IMR-90 (cell line): ENCODE measurements at regions of chr14 and their contacts with region 1.

Region 1: DNA sequence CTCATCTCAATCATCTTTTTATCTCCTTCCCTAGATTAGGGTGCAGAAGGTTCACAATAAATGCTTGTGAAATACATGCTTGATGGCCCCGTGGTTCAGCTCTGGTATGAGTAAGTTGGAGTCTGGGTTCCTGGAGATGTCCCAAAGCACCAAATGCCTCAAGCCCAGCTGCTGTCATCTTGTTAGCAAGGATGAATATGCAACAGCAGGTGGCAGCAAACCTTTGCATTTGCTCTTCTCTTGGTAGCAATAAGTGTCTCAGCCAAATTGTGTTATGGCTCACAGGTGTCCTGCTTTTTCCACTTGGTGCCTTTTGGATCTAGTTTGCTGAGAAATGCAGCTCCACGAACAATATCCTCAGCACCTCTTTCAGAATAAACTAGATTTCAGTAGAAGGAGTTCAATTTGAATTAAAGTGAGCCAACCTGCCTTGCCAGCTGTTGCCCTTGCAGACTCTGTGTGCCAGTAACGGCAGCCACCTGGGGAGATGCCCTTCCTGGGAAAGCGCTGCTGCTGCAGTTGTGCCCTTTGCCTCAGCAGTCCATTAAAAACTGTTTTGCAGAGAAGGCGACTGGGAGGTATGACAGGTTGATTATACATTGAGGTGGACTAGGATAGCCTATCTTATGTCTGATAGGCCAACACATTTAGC is 417.3 kb downstream of the SNAPC1 start:
- DNase-seq: peak; percentile 91
- ATAC-seq: peak; percentile 85
- H3K4me3 ChIP-seq: no peak overlapping the region
- H3K27ac ChIP-seq: no peak overlapping the region
- H3K4me1 ChIP-seq: no peaks in the 10 kb centered on the region
- H3K27me3 ChIP-seq: peaks cover 3% of the 10 kb centered on the region
- CTCF ChIP-seq: peak; percentile 86
- POLR2A ChIP-seq: peak; percentile 43; the same call in 1 of the 2 replicates
- RAD21 ChIP-seq: peak; percentile 97

Region 2: DNA sequence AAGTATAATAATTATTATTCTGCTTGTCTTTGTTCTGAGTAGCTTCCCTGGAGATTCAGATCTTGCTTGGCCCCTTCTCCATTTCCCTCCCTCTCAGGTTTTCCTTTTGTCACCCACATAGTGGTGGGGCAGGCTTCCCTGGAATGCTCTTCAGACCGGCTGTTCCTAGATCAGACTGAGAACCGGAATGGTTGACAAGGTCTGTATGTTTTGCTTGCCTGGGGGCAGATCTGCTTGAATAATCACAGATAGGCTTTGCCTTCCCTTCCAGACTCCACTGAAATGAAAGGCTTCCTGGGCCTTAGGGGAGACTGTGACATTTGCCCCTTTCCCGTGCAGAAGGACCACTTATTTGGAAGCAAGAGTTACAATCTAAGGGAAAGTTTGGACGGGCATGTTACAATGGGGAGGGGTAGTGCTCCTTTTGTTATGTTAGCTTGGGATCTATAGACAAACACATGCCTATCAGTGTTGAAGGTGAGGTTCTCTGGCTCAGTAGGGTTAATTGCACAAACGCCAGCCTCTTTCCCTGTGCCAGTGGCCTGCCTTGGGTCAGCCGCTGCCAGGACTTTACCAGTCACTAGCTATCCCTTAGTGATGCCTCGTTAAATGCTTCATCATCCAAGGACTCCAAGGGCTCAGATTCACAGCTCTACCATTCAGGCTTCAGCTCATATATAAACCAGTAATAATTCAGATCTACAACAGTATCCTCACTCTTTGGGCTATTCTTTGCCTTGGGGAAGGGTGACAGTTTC is 238.6 kb before region 1 on chr14:
- CTCF ChIA-PET with region 1: no interaction called
- POLR2A ChIA-PET with region 1: no interaction called
- dilution Hi-C with region 1: no loop called
- in situ Hi-C with region 1: no loop called
- intact Hi-C with region 1: no loop called
- DNase-seq: no peak
- ATAC-seq: no peak; the same call in 1 of the 2 replicates
- H3K4me3 ChIP-seq: no peak overlapping the region
- H3K27ac ChIP-seq: no peak overlapping the region
- H3K4me1 ChIP-seq: peaks cover 4% of the 10 kb centered on the region
- H3K27me3 ChIP-seq: no peaks in the 10 kb centered on the region
- CTCF ChIP-seq: no peak
- POLR2A ChIP-seq: no peak
- RAD21 ChIP-seq: no peak

Region 3: DNA sequence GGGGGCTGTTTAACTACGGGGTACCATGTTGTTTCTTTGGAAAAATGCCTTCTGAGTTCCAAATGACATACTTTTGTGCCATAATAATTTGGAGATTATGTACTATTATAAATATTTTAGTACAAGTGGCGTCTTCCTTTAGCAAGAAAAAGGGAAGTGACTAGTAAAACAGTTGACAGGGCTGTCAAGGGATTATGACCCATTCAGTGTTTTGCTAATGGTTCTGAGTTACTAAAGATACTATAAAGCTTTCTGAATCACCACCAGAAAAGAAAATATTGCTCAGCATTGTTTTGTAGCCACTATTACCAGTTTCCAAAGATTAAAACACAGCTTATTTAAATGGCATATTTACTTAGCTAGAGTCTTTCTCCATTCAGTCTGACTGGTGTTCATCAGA is 82.4 kb before region 1 on chr14:
- CTCF ChIA-PET with region 1: no interaction called
- POLR2A ChIA-PET with region 1: no interaction called
- dilution Hi-C with region 1: no loop called
- in situ Hi-C with region 1: no loop called
- intact Hi-C with region 1: no loop called
- DNase-seq: peak; percentile 3
- ATAC-seq: no peak; the same call in 1 of the 2 replicates
- H3K4me3 ChIP-seq: no peak overlapping the region
- H3K27ac ChIP-seq: no peak overlapping the region
- H3K4me1 ChIP-seq: no peaks in the 10 kb centered on the region
- H3K27me3 ChIP-seq: no peaks in the 10 kb centered on the region
- CTCF ChIP-seq: no peak
- POLR2A ChIP-seq: no peak
- RAD21 ChIP-seq: no peak

Region 4: DNA sequence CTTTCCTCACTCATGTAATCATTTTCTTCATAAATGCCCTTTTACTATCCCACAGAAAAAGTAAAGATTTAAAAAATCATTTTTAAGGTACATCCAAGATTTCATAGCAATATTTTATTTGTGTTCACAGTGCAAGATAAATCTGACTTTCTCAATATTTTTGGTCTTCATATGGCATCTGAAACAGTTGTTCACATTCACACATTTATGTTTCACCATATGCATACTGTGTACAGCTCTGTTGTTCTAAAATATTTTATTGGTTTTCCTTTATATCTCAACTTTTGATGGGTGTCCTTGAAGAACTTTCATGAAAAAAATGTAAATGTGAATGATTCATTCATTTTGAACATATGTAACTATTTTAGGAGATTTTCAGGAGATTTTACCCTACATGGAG is 68.6 kb before region 1 on chr14:
- CTCF ChIA-PET with region 1: no interaction called
- POLR2A ChIA-PET with region 1: no interaction called
- dilution Hi-C with region 1: no loop called
- in situ Hi-C with region 1: no loop called
- intact Hi-C with region 1: no loop called
- DNase-seq: no peak
- ATAC-seq: no peak
- H3K4me3 ChIP-seq: no peak overlapping the region
- H3K27ac ChIP-seq: no peak overlapping the region
- H3K4me1 ChIP-seq: no peaks in the 10 kb centered on the region
- H3K27me3 ChIP-seq: no peaks in the 10 kb centered on the region
- CTCF ChIP-seq: no peak
- POLR2A ChIP-seq: no peak
- RAD21 ChIP-seq: no peak

Region 5: GRCh38 chr14:62443796-62444195 is 264.3 kb after region 1 on chr14:
- CTCF ChIA-PET with region 1: no interaction called
- POLR2A ChIA-PET with region 1: no interaction called
- dilution Hi-C with region 1: no loop called
- in situ Hi-C with region 1: no loop called
- intact Hi-C with region 1: loop called (anchors 10 kb)
- DNase-seq: peak; percentile 82
- ATAC-seq: peak; percentile 85
- H3K4me3 ChIP-seq: no peak overlapping the region
- H3K27ac ChIP-seq: no peak overlapping the region
- H3K4me1 ChIP-seq: peaks cover 1% of the 10 kb centered on the region; the same call in 1 of the 2 replicates
- H3K27me3 ChIP-seq: no peaks in the 10 kb centered on the region
- CTCF ChIP-seq: no peak
- POLR2A ChIP-seq: no peak
- RAD21 ChIP-seq: no peak

Region 6: GRCh38 chr14:62654641-62655040 is 475.1 kb after region 1 on chr14:
- CTCF ChIA-PET with region 1: no interaction called
- POLR2A ChIA-PET with region 1: no interaction called
- dilution Hi-C with region 1: no loop called
- in situ Hi-C with region 1: no loop called
- intact Hi-C with region 1: loop called (anchors 10 kb)
- DNase-seq: peak; percentile 64
- ATAC-seq: peak; percentile 59
- H3K4me3 ChIP-seq: no peak overlapping the region
- H3K27ac ChIP-seq: no peak overlapping the region
- H3K4me1 ChIP-seq: peaks cover 2% of the 10 kb centered on the region; the same call in 1 of the 2 replicates
- H3K27me3 ChIP-seq: no peaks in the 10 kb centered on the region
- CTCF ChIP-seq: no peak
- POLR2A ChIP-seq: no peak
- RAD21 ChIP-seq: no peak

Region 7: GRCh38 chr14:63039800-63040380 is 860.4 kb after region 1 on chr14:
- CTCF ChIA-PET with region 1: no interaction called
- POLR2A ChIA-PET with region 1: no interaction called
- dilution Hi-C with region 1: no loop called
- in situ Hi-C with region 1: loop called (anchors 10 kb)
- intact Hi-C with region 1: loop called (anchors 1 kb)
- DNase-seq: peak; percentile 84
- ATAC-seq: peak; percentile 98
- H3K4me3 ChIP-seq: no peak overlapping the region
- H3K27ac ChIP-seq: no peak overlapping the region
- H3K4me1 ChIP-seq: no peaks in the 10 kb centered on the region
- H3K27me3 ChIP-seq: peaks cover 8% of the 10 kb centered on the region
- CTCF ChIP-seq: peak; percentile 47
- POLR2A ChIP-seq: no peak
- RAD21 ChIP-seq: peak; percentile 62

Region 8: GRCh38 chr14:63134801-63135200 is 955.3 kb after region 1 on chr14:
- CTCF ChIA-PET with region 1: no interaction called
- POLR2A ChIA-PET with region 1: no interaction called
- dilution Hi-C with region 1: no loop called
- in situ Hi-C with region 1: loop called (anchors 10 kb)
- intact Hi-C with region 1: loop called (anchors 2 kb)
- DNase-seq: peak; percentile 35
- ATAC-seq: peak; percentile 59; the same call in 1 of the 2 replicates
- H3K4me3 ChIP-seq: no peak overlapping the region
- H3K27ac ChIP-seq: no peak overlapping the region
- H3K4me1 ChIP-seq: no peaks in the 10 kb centered on the region
- H3K27me3 ChIP-seq: no peaks in the 10 kb centered on the region
- CTCF ChIP-seq: peak; percentile 42
- POLR2A ChIP-seq: no peak
- RAD21 ChIP-seq: peak; percentile 45

Region 9: GRCh38 chr14:63276492-63277342 is 1097.2 kb after region 1 on chr14:
- CTCF ChIA-PET with region 1: interaction called, 3 read pairs
- POLR2A ChIA-PET with region 1: no interaction called
- dilution Hi-C with region 1: no loop called
- in situ Hi-C with region 1: no loop called
- intact Hi-C with region 1: loop called (anchors 1 kb)
- DNase-seq: peak; percentile 64
- ATAC-seq: peak; percentile 85
- H3K4me3 ChIP-seq: no peak overlapping the region
- H3K27ac ChIP-seq: no peak overlapping the region
- H3K4me1 ChIP-seq: no peaks in the 10 kb centered on the region
- H3K27me3 ChIP-seq: no peaks in the 10 kb centered on the region
- CTCF ChIP-seq: peak; percentile 88
- POLR2A ChIP-seq: no peak
- RAD21 ChIP-seq: peak; percentile 85